ENCODE measurements at regions of chr2 and their contacts with region 1.

Region 1: DNA sequence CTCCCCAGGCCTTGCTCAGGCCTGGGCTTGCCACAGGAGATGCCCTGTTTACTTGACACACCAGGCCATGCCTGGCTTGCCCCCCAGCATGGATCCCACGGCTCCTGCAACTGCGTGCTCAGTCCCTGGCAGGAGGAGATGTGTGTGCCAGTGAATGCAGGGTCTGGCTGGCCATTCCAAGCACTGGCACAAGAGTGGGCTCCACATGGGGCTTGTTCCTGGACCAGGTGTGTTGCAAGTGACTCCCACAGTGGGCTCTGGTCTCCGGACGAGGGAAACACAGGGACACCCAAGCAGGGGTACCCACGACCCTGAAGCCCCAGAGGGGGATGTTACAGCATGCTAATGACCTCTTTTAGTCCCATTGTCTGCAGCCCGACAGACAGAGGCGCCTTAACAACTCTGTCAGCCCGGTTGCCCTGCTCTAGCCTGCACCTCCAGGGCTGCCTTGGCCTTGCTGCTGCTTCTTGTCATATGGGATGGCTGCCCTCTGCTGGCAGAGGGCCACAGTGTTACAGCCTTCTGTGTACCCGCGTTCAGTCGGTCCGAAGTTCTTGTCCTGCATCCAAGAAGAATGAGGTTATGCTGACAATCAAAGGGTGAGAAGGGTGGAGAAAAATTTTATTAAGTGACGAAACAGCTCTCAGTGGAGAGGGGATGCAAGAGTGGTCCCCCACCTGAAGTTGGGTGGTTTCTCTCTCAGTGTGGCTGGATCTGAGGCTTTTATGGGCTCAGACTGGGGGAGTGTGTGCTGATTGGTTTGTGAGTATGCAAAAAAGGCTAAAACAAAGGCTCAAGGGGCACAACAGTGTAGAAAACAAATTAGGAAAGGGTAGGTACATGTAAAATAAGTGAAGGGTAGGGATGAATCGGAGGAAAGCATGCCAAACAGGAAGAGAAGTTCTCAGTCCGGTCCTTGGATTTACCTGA is 180.4 kb downstream of the MBD5 start:
- DNase-seq: peak; percentile 42
- ATAC-seq: peak; percentile 99
- H3K4me3 ChIP-seq: no peak overlapping the region
- H3K27ac ChIP-seq: no peak overlapping the region
- H3K4me1 ChIP-seq: no peaks in the 10 kb centered on the region
- H3K27me3 ChIP-seq: no peaks in the 10 kb centered on the region
- CTCF ChIP-seq: peak; percentile 65 to 73 (median 69)
- POLR2A ChIP-seq: no peak
- RAD21 ChIP-seq: peak; percentile 71

Region 2: DNA sequence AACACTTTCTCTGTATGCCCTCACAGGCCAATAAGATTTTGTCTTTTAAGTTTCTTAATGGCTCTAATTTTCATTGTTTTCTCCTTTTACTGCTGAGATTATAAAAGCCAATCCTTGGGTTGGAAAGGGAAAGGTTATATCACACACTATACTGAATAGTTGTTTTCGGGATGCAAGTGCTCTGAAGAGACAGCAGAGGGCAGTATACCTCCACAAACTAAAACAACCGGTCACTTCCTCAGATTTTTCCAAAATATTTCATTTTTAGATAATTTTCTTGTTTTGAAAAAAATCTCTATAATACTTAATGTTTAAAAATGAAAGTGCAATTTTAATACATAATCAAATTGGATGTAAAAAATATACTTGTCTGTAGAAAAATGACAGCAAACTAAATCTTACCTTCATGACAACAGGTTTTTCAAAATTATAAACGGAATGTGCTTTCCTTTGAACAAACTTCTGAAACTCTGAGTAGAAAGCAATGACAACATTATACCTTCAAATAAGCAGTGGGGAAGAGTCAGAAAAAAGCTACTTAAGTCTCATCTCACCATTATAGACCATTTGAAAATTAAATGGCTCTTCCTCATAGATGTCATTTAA is 263.5 kb before region 1 on chr2:
- CTCF ChIA-PET with region 1: no interaction called
- POLR2A ChIA-PET with region 1: no interaction called
- RAD21 ChIA-PET with region 1: no interaction called
- intact Hi-C with region 1: loop called (anchors 1 kb)
- DNase-seq: peak; percentile 7
- ATAC-seq: peak; percentile 61; the same call in 1 of the 2 replicates
- H3K4me3 ChIP-seq: no peak overlapping the region
- H3K27ac ChIP-seq: no peak overlapping the region
- H3K4me1 ChIP-seq: no peaks in the 10 kb centered on the region
- H3K27me3 ChIP-seq: no peaks in the 10 kb centered on the region
- CTCF ChIP-seq: peak; percentile 49 to 78 (median 76)
- POLR2A ChIP-seq: no peak
- RAD21 ChIP-seq: peak; percentile 78

Region 3: GRCh38 chr2:147989809-147990403 is 211.4 kb before region 1 on chr2:
- CTCF ChIA-PET with region 1: interaction called, 3 read pairs
- POLR2A ChIA-PET with region 1: no interaction called
- RAD21 ChIA-PET with region 1: no interaction called
- intact Hi-C with region 1: loop called (anchors 1 kb)
- DNase-seq: peak; percentile 18
- ATAC-seq: peak; percentile 73
- H3K4me3 ChIP-seq: no peak overlapping the region
- H3K27ac ChIP-seq: no peak overlapping the region
- H3K4me1 ChIP-seq: no peaks in the 10 kb centered on the region
- H3K27me3 ChIP-seq: no peaks in the 10 kb centered on the region
- CTCF ChIP-seq: peak; percentile 44 to 98 (median 79)
- POLR2A ChIP-seq: no peak
- RAD21 ChIP-seq: peak; percentile 86